ENCODE measurements at regions of chr7 and their contacts with region 1.

Region 1: DNA sequence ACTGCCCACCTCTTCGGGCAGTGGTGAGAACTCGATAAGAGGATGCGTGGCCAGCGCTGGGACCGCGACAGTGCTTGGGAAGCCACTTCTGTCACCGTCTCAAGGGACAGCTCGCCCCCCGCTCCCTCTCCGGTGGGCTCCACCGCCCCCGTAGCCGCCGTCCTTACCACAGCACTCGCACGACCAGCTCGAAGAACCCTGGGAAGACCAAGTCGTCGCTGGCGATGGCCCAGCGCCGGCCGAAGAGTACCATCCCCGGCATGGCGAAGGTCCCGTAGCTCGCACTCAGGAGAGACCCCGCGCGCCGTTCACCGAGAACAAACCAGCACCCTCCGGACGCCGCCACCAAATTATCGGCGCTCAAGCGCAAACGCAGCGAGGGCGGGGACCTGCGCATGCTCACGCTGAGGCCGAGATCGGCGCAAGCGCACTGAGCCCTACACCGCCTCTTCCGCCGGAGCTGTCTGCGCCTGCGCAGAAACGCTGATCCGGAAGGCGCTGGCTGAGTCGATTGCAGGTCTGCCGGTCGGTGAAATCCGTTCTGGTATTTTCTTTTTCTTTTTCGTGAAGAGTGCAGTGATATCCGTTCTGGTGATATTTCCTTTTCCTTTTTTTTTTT is at the start of gene DAGLB:
- DNase-seq: peak; percentile 96
- H3K4me3 Mint-ChIP-seq: peak within 1 kb of the TSS; percentile 91
- H3K27ac Mint-ChIP-seq: peak within 1 kb of the TSS; percentile 89
- H3K4me1 Mint-ChIP-seq: peaks cover 37% of the 10 kb centered on the region
- H3K27me3 Mint-ChIP-seq: no peaks in the 10 kb centered on the region
- total RNA-seq, gene DAGLB: 13.1 to 13.6 TPM

Region 2: GRCh38 chr7:6350433-6351058 is 97.1 kb before region 1 on chr7:
- CTCF ChIA-PET with region 1: no interaction called
- intact Hi-C with region 1: no loop called
- DNase-seq: no peak
- H3K4me3 Mint-ChIP-seq: no peak overlapping the region
- H3K27ac Mint-ChIP-seq: no peak overlapping the region
- H3K4me1 Mint-ChIP-seq: peaks cover 7% of the 10 kb centered on the region
- H3K27me3 Mint-ChIP-seq: no peaks in the 10 kb centered on the region

Region 3: GRCh38 chr7:6367701-6368211 is 79.9 kb before region 1 on chr7:
- CTCF ChIA-PET with region 1: no interaction called
- intact Hi-C with region 1: no loop called
- DNase-seq: no peak
- H3K4me3 Mint-ChIP-seq: no peak overlapping the region
- H3K27ac Mint-ChIP-seq: no peak overlapping the region
- H3K4me1 Mint-ChIP-seq: peaks cover 7% of the 10 kb centered on the region
- H3K27me3 Mint-ChIP-seq: no peaks in the 10 kb centered on the region

Region 4: GRCh38 chr7:6435486-6436384 is 12.0 kb before region 1 on chr7:
- CTCF ChIA-PET with region 1: interaction called, 4 read pairs
- intact Hi-C with region 1: loop called (anchors 1 kb)
- DNase-seq: peak; percentile 95
- H3K4me3 Mint-ChIP-seq: peak overlapping the region; percentile 58
- H3K27ac Mint-ChIP-seq: peak overlapping the region; percentile 78
- H3K4me1 Mint-ChIP-seq: peaks cover 43% of the 10 kb centered on the region
- H3K27me3 Mint-ChIP-seq: no peaks in the 10 kb centered on the region

Measured in activated naive CD4-positive, alpha-beta T cell treated with anti-CD3 and anti-CD28 coated beads for 36 hours (primary cell).